ENCODE measurements at regions of chr22 and their contacts with region 1.

Region 1: DNA sequence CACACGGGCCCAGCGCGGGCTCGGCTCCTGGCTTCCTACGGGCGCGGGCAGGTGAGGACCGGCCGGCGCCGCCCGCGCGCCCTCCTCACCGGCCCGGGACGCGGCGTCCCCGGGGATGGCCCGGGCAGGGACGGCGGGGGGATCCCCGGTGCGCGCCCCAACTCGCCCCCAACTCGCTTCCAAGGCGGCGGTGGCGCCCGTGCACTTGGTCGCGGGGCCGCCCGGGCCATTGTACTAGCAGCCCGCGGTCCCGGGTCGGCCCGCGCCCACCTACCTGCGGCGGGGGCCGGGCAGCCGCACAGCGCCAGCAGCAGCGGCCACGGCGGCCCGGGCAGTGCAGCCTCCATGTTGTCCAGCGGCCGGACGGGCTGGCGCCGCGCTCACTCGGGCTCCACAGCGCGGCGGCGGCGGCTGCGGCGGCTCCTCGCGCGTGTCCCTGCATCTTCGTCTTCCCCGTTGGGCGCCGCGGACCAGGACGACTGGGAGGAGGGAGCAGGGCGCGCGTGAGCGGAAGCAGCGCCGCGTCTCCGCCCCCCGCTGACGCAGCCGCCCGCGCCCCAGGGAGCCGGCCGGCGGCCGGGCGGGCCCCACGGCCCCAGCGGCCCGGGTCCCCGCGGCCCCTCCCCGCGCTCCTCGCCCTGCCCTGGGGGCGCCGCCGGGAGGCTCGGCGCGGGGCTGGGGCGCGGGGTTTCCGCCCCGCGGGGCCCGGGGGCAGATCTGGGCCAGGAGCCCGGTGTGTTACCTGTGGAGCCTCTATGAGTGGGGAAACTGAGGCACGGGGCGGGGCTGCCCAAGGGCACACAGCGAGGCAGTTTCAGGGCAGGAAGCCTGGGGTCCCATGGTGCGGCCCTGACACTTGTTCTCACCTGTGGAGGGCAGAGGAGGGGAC is 159.3 kb upstream of the GRK3 start:
- DNase-seq: peak; percentile 77
- H3K4me3 ChIP-seq: peak overlapping the region; percentile 87
- H3K27ac ChIP-seq: peak overlapping the region; percentile 47
- H3K4me1 ChIP-seq: peaks cover 37% of the 10 kb centered on the region
- CTCF ChIP-seq: no peak

Region 2: DNA sequence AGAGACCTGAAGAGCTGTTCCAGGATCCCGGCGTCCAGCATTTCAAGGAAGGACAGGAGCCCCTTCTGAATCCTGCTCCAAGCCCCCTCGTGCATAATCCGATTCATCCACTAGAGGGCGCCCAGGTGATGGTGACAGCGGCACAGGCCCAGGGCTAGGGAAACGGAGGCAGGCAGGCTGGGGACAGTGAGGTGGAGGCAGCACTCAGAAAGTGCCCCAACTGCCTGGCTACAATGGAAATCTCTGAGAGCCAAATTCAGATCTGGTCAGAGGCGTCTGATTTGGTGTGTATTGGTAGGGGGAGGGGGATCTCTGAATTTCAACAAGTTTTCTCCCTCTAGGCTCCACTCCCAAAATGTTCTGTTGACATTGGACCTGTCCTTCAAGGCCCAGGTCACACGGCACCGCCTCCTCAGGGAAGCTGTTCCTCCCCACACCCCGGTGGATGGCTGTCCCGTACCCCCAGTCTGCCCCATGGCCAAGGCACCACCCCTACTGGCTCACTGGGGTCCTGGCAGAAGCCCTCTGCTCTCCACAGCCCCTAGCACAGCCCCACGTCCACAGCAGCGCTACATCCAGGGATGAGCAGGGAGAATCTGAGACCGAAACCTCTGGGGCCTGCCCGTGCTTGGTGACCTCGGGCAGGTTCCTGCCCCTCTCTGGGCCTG is 42.8 kb before region 1 on chr22:
- CTCF ChIA-PET with region 1: no interaction called
- POLR2A ChIA-PET with region 1: no interaction called
- intact Hi-C with region 1: loop called (anchors 5 kb)
- DNase-seq: peak; percentile 66
- H3K4me3 ChIP-seq: no peak overlapping the region
- H3K27ac ChIP-seq: no peak overlapping the region
- H3K4me1 ChIP-seq: no peaks in the 10 kb centered on the region
- CTCF ChIP-seq: peak; percentile 93

Region 3: DNA sequence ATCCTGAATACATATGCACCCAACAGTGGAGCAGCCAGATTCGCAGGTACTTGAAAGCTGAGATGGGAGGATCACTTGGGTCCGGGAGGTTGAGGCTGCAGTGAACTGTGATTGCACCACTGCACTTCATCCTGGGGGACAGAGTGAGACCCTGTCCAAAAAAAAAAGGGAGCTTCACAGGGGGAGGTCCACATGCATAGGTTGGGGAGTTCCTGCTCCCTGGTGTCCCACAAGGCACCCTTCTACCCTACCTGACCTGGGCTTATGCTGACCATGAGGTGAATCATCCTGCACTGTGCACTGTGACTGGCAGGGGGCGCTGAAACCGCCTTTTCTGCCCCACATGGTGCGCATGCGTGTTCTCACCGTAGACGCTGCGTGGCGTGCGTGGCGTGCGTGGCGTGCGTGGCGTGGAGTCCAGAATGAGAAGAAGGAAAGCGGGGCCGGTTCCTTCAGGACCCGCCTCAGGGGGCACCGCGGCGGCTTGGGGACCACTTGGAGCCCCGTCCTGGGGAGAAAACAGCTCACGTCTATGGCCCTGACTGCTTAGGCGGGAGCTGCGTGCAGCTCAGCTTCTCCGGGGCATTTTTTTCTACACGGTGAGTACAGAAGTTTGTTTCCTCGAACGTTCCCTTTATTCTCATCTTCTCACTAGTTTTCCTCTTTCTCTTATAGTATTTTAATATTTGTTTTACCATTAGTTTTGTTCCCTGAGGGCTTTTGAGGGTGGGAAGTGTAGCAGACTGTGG is 42.7 kb after region 1 on chr22:
- CTCF ChIA-PET with region 1: interaction called, 4 read pairs
- POLR2A ChIA-PET with region 1: no interaction called
- intact Hi-C with region 1: loop called (anchors 2 kb)
- DNase-seq: peak; percentile 92
- H3K4me3 ChIP-seq: peak overlapping the region; percentile 80
- H3K27ac ChIP-seq: peak overlapping the region; percentile 51
- H3K4me1 ChIP-seq: peaks cover 31% of the 10 kb centered on the region
- CTCF ChIP-seq: peak; percentile 83